Panc1 (cell line): ENCODE measurements at regions of chr19 and their contacts with region 1.

Region 1: GRCh38 chr19:17441241-17442021 is 7.0 kb downstream of the TMEM221 start:
- DNase-seq: no peak
- ATAC-seq: peak; percentile 71; the same call in 1 of the 2 replicates
- H3K4me3 ChIP-seq: no peak overlapping the region
- H3K27ac ChIP-seq: no peak overlapping the region
- H3K4me1 ChIP-seq: no peaks in the 10 kb centered on the region
- H3K27me3 ChIP-seq: no peaks in the 10 kb centered on the region
- CTCF ChIP-seq: peak; percentile 38

Region 2: DNA sequence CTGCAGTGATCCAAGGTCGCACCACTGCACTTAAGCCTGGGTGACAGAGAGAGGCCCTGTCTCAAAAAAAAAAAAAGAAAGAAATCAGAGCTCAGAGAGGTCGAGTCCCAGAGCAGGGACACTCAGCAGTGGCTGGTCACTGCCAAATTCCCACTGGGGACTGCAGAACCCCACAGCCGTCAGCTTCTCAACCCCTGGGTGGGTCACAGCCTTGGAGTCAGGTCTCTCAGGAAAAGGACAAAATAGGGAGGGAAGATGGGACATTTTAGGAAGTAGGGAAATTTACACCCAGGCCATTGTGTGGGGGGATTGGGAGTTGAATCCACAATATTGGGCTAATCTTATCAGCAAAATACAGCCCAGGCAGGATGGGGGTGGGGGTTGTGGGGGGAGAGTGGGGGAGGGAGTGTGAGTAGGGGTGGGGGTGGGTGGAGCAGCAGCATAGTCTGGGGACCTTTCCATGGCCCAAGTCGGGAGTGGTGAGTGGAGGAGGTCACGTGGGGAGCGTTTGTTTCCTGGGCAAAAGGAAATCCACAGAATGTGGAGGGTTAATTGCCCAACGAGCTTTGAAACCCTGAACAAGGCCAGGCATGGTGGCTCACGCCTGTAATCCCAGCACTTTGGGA is 42.4 kb before region 1 on chr19:
- CTCF ChIA-PET with region 1: interaction called, 11 read pairs
- POLR2A ChIA-PET with region 1: no interaction called
- in situ Hi-C with region 1: no loop called
- intact Hi-C with region 1: no loop called
- DNase-seq: no peak
- ATAC-seq: no peak
- H3K4me3 ChIP-seq: no peak overlapping the region
- H3K27ac ChIP-seq: no peak overlapping the region
- H3K4me1 ChIP-seq: no peaks in the 10 kb centered on the region
- H3K27me3 ChIP-seq: no peaks in the 10 kb centered on the region
- CTCF ChIP-seq: no peak